ENCODE measurements at regions of chr4 and their contacts with region 1.

Region 1: GRCh38 chr4:182925298-182925738 is 8.1 kb upstream of the DCTD start:
- DNase-seq: peak; percentile 47
- ATAC-seq: peak; percentile 100
- H3K4me3 ChIP-seq: no peak overlapping the region
- H3K27ac ChIP-seq: no peak overlapping the region
- H3K4me1 ChIP-seq: no peaks in the 10 kb centered on the region
- H3K27me3 ChIP-seq: no peaks in the 10 kb centered on the region; a peak in 1 of 4 replicates
- CTCF ChIP-seq: peak; percentile 77 to 93 (median 88)
- EP300 ChIP-seq: no peak
- POLR2A ChIP-seq: no peak
- RAD21 ChIP-seq: peak; percentile 89

Region 2: DNA sequence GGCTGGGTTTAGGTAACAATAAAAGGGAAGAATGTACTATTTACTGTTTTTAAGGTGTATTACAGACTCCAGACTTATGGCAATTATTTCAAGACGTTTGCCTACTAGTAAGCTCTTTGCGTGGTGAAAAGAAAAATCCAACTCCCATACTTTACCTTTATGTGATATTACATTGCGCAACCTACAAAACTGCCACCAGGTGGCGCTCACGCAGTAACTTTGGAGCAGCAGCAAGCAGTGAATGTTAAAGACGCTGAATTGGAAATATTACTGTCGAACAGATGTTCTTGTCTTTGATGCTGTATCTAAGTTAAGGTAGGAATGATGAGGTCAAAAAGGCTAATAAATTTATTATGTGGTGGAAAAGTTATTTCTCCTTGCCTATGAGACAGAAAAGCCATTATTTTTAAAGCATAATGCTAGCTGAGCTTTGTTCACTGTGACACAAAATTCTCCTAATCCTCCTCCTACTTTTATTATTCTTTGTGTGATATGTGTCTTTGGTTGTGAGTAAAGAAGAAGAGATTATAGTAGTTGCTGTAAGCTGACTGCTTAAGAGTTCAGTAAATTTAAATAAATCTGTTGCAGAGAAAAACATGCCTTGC is 1782.0 kb before region 1 on chr4:
- CTCF ChIA-PET with region 1: interaction called, 5 read pairs
- POLR2A ChIA-PET with region 1: no interaction called
- RAD21 ChIA-PET with region 1: interaction called, 3 read pairs
- SMC1A ChIA-PET with region 1: no interaction called
- in situ Hi-C with region 1: no loop called
- intact Hi-C with region 1: loop called (anchors 2 kb)
- DNase-seq: peak; percentile 5
- ATAC-seq: peak; percentile 90
- H3K4me3 ChIP-seq: no peak overlapping the region
- H3K27ac ChIP-seq: no peak overlapping the region
- H3K4me1 ChIP-seq: no peaks in the 10 kb centered on the region
- H3K27me3 ChIP-seq: no peaks in the 10 kb centered on the region; a peak in 1 of 4 replicates
- CTCF ChIP-seq: peak; percentile 81 to 84 (median 83)
- EP300 ChIP-seq: no peak
- POLR2A ChIP-seq: no peak
- RAD21 ChIP-seq: peak; percentile 95

Region 3: GRCh38 chr4:182418054-182418734 is 507.1 kb before region 1 on chr4:
- CTCF ChIA-PET with region 1: no interaction called
- POLR2A ChIA-PET with region 1: no interaction called
- RAD21 ChIA-PET with region 1: no interaction called
- SMC1A ChIA-PET with region 1: no interaction called
- in situ Hi-C with region 1: no loop called
- intact Hi-C with region 1: no loop called
- DNase-seq: no peak
- ATAC-seq: 0 out of 3 replicates have a peak, but pooled peaks have one; percentile 36
- H3K4me3 ChIP-seq: no peak overlapping the region
- H3K27ac ChIP-seq: no peak overlapping the region
- H3K4me1 ChIP-seq: no peaks in the 10 kb centered on the region
- H3K27me3 ChIP-seq: no peaks in the 10 kb centered on the region
- CTCF ChIP-seq: no peak
- EP300 ChIP-seq: no peak
- POLR2A ChIP-seq: no peak
- RAD21 ChIP-seq: no peak

Region 4: GRCh38 chr4:182478475-182478874 is 446.8 kb before region 1 on chr4:
- CTCF ChIA-PET with region 1: interaction called, 20 read pairs
- POLR2A ChIA-PET with region 1: no interaction called
- RAD21 ChIA-PET with region 1: interaction called, 11 read pairs
- SMC1A ChIA-PET with region 1: interaction called, 6 read pairs
- in situ Hi-C with region 1: no loop called
- intact Hi-C with region 1: loop called (anchors 1 kb)
- DNase-seq: no peak
- ATAC-seq: peak; percentile 82
- H3K4me3 ChIP-seq: no peak overlapping the region
- H3K27ac ChIP-seq: no peak overlapping the region
- H3K4me1 ChIP-seq: no peaks in the 10 kb centered on the region
- H3K27me3 ChIP-seq: no peaks in the 10 kb centered on the region
- CTCF ChIP-seq: peak; percentile 42 to 48 (median 43); a peak in 5 of 6 replicates
- EP300 ChIP-seq: no peak
- POLR2A ChIP-seq: no peak
- RAD21 ChIP-seq: peak; percentile 48

Region 5: DNA sequence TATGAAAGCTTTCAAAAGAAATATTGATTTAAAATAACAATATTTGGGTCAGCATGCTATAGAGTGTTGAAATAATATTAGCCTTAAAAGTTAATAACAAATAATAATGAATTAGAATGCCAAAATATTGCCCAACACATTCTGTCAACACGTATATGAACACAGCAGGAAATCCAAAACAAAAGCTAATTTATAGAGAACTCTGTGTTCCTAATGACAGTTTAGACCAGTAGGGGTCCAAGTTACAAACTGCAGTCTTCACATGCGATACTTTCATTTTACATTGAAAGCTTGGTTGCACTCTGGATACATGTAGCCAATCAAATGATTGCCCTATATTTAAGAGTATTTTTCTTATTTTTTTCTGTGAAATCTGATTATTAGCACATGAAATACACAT is 282.5 kb before region 1 on chr4:
- CTCF ChIA-PET with region 1: interaction called, 4 read pairs
- POLR2A ChIA-PET with region 1: no interaction called
- RAD21 ChIA-PET with region 1: no interaction called
- SMC1A ChIA-PET with region 1: no interaction called
- in situ Hi-C with region 1: no loop called
- intact Hi-C with region 1: loop called (anchors 10 kb)
- DNase-seq: no peak
- ATAC-seq: peak; percentile 53
- H3K4me3 ChIP-seq: no peak overlapping the region
- H3K27ac ChIP-seq: no peak overlapping the region
- H3K4me1 ChIP-seq: no peaks in the 10 kb centered on the region
- H3K27me3 ChIP-seq: no peaks in the 10 kb centered on the region
- CTCF ChIP-seq: peak in 2 of 3 experiments; percentile 6 to 19; a peak in 1 of 6 replicates
- EP300 ChIP-seq: no peak
- POLR2A ChIP-seq: no peak
- RAD21 ChIP-seq: no peak

Region 6: GRCh38 chr4:182683661-182684060 is 241.7 kb before region 1 on chr4:
- CTCF ChIA-PET with region 1: no interaction called
- POLR2A ChIA-PET with region 1: no interaction called
- RAD21 ChIA-PET with region 1: no interaction called
- SMC1A ChIA-PET with region 1: no interaction called
- in situ Hi-C with region 1: no loop called
- intact Hi-C with region 1: no loop called
- DNase-seq: no peak
- ATAC-seq: no peak
- H3K4me3 ChIP-seq: no peak overlapping the region
- H3K27ac ChIP-seq: no peak overlapping the region
- H3K4me1 ChIP-seq: no peaks in the 10 kb centered on the region
- H3K27me3 ChIP-seq: no peaks in the 10 kb centered on the region
- CTCF ChIP-seq: no peak
- EP300 ChIP-seq: no peak
- POLR2A ChIP-seq: no peak
- RAD21 ChIP-seq: no peak

Region 7: GRCh38 chr4:182897601-182898478 is 27.5 kb before region 1 on chr4:
- CTCF ChIA-PET with region 1: interaction called, 26 read pairs
- POLR2A ChIA-PET with region 1: interaction called, 3 read pairs
- RAD21 ChIA-PET with region 1: interaction called, 4 read pairs
- SMC1A ChIA-PET with region 1: no interaction called
- in situ Hi-C with region 1: no loop called
- intact Hi-C with region 1: no loop called
- DNase-seq: no peak
- ATAC-seq: no peak
- H3K4me3 ChIP-seq: no peak overlapping the region
- H3K27ac ChIP-seq: no peak overlapping the region
- H3K4me1 ChIP-seq: no peaks in the 10 kb centered on the region
- H3K27me3 ChIP-seq: no peaks in the 10 kb centered on the region
- CTCF ChIP-seq: no peak
- EP300 ChIP-seq: no peak
- POLR2A ChIP-seq: peak; percentile 39; the same call in 1 of the 2 replicates
- RAD21 ChIP-seq: no peak

Region 8: GRCh38 chr4:182938205-182938645 is 12.9 kb after region 1 on chr4:
- CTCF ChIA-PET with region 1: interaction called, 38 read pairs
- POLR2A ChIA-PET with region 1: no interaction called
- RAD21 ChIA-PET with region 1: interaction called, 4 read pairs
- SMC1A ChIA-PET with region 1: interaction called, 14 read pairs
- in situ Hi-C with region 1: no loop called
- intact Hi-C with region 1: no loop called
- DNase-seq: no peak
- ATAC-seq: peak; percentile 99
- H3K4me3 ChIP-seq: no peak overlapping the region
- H3K27ac ChIP-seq: no peak overlapping the region
- H3K4me1 ChIP-seq: 0 out of 2 replicates have a peak, but pooled peaks cover 3% of the 10 kb centered on the region
- H3K27me3 ChIP-seq: no peaks in the 10 kb centered on the region
- CTCF ChIP-seq: peak; percentile 94 to 97 (median 97)
- EP300 ChIP-seq: no peak
- POLR2A ChIP-seq: no peak
- RAD21 ChIP-seq: peak; percentile 94

Region 9: DNA sequence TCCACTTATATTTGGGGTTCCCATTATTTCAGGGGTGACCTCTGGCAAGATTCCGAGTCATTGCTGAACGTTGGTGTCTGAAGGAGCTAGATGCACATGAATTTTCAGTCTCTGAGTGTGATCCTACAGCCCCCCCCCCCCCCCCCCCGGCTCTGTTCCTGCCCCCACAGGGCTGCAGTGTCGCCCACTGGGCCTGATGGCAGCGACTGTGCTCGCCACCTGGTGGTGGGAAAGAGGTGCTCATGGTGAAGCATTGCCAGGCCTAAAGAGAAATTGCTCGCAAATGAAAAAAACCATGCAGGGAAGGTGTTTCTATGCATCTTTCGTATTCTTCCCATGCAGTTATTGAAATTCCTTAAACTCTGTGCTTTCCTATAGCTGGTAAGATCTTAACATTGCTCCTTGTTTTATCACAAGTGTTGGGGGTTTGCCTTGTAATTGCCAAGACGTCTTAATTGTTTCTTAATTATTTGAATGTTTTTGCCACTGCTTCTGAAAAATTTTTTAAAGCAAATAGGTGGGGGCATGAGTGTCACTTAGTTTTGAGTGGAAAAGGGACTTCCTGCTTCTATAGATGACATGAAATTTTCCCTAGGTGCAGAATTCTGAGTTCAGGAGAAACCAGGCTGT is 331.6 kb after region 1 on chr4:
- CTCF ChIA-PET with region 1: interaction called, 31 read pairs
- POLR2A ChIA-PET with region 1: no interaction called
- RAD21 ChIA-PET with region 1: interaction called, 12 read pairs
- SMC1A ChIA-PET with region 1: interaction called, 5 read pairs
- in situ Hi-C with region 1: no loop called
- intact Hi-C with region 1: no loop called
- DNase-seq: no peak
- ATAC-seq: peak; percentile 96
- H3K4me3 ChIP-seq: no peak overlapping the region
- H3K27ac ChIP-seq: no peak overlapping the region
- H3K4me1 ChIP-seq: no peaks in the 10 kb centered on the region
- H3K27me3 ChIP-seq: no peaks in the 10 kb centered on the region; a peak in 1 of 4 replicates
- CTCF ChIP-seq: peak; percentile 69 to 85 (median 72)
- EP300 ChIP-seq: no peak
- POLR2A ChIP-seq: no peak
- RAD21 ChIP-seq: peak; percentile 68

Region 10: GRCh38 chr4:183444214-183445066 is 519.1 kb after region 1 on chr4 and contains the start of gene CDKN2AIP:
- CTCF ChIA-PET with region 1: no interaction called
- POLR2A ChIA-PET with region 1: no interaction called
- RAD21 ChIA-PET with region 1: no interaction called
- SMC1A ChIA-PET with region 1: no interaction called
- in situ Hi-C with region 1: no loop called
- intact Hi-C with region 1: no loop called
- DNase-seq: peak; percentile 60
- ATAC-seq: peak; percentile 92
- H3K4me3 ChIP-seq: peak within 1 kb of the TSS; percentile 79
- H3K27ac ChIP-seq: peak within 1 kb of the TSS; percentile 89
- H3K4me1 ChIP-seq: peaks cover 7% of the 10 kb centered on the region
- H3K27me3 ChIP-seq: no peaks in the 10 kb centered on the region
- CTCF ChIP-seq: peak; percentile 12 to 22 (median 14); a peak in 3 of 6 replicates
- EP300 ChIP-seq: peak in 1 of 2 experiments; percentile 19; a peak in 1 of 4 replicates
- POLR2A ChIP-seq: peak; percentile 93
- RAD21 ChIP-seq: no peak
- polyA plus RNA-seq, gene CDKN2AIP: 6.0 to 9.6 TPM